GM12878 (cell line): ENCODE measurements at regions of chr6 and their contacts with region 1.

Region 1: GRCh38 chr6:125804264-125804663 is 13.5 kb downstream of the NCOA7 start:
- DNase-seq: peak; percentile 61
- ATAC-seq: peak; percentile 72
- H3K4me3 ChIP-seq: no peak overlapping the region
- H3K27ac ChIP-seq: peak overlapping the region; percentile 49
- H3K4me1 ChIP-seq: peaks cover 69% of the 10 kb centered on the region
- H3K27me3 ChIP-seq: no peaks in the 10 kb centered on the region
- CTCF ChIP-seq: no peak
- EP300 ChIP-seq: peak; percentile 83 to 98; a peak in 3 of 4 replicates
- POLR2A ChIP-seq: no peak
- RAD21 ChIP-seq: no peak

Region 2: GRCh38 chr6:125623085-125623484 is 181.2 kb before region 1 on chr6:
- CTCF ChIA-PET with region 1: no interaction called
- POLR2A ChIA-PET with region 1: no interaction called
- RAD21 ChIA-PET with region 1: no interaction called
- SMC1A ChIA-PET with region 1: no interaction called
- in situ Hi-C with region 1: no loop called
- intact Hi-C with region 1: no loop called
- DNase-seq: no peak
- ATAC-seq: no peak
- H3K4me3 ChIP-seq: no peak overlapping the region
- H3K27ac ChIP-seq: no peak overlapping the region
- H3K4me1 ChIP-seq: no peaks in the 10 kb centered on the region
- H3K27me3 ChIP-seq: peaks cover 0 to 2% of the 10 kb centered on the region in 2 experiments; a peak in 1 of 4 replicates
- CTCF ChIP-seq: no peak
- EP300 ChIP-seq: no peak
- POLR2A ChIP-seq: no peak
- RAD21 ChIP-seq: no peak

Region 3: DNA sequence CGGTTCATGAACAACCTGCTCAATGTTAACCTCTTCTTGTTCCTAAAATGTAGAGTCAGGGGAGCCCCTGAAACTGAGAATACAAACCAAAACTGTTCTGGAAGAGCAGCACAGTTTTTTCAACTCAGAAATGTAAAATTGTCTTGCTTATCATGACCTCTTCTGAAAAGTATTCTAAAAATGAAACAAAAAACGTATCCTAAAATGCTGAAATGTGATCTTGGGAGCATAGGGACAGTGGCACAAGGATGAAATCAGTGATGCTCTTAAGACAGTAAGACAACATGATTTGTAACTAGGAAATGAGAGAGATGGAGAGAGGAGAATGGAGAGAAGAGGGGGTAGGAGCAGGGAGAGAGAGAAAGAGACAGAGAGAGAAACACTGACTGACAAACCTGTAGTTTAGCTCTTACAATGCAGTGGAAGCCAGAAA is 14.0 kb after region 1 on chr6:
- CTCF ChIA-PET with region 1: interaction called, 197 read pairs
- POLR2A ChIA-PET with region 1: interaction called, 15 read pairs
- RAD21 ChIA-PET with region 1: interaction called, 11 read pairs
- SMC1A ChIA-PET with region 1: interaction called, 325 read pairs
- in situ Hi-C with region 1: no loop called
- intact Hi-C with region 1: no loop called
- DNase-seq: no peak
- ATAC-seq: peak; percentile 30
- H3K4me3 ChIP-seq: peak overlapping the region; percentile 57
- H3K27ac ChIP-seq: peak overlapping the region; percentile 63
- H3K4me1 ChIP-seq: peaks cover 27% of the 10 kb centered on the region
- H3K27me3 ChIP-seq: no peaks in the 10 kb centered on the region
- CTCF ChIP-seq: no peak
- EP300 ChIP-seq: no peak
- POLR2A ChIP-seq: no peak
- RAD21 ChIP-seq: no peak

Region 4: GRCh38 chr6:126307849-126308248 is 503.6 kb after region 1 on chr6:
- CTCF ChIA-PET with region 1: no interaction called
- POLR2A ChIA-PET with region 1: no interaction called
- RAD21 ChIA-PET with region 1: no interaction called
- SMC1A ChIA-PET with region 1: no interaction called
- in situ Hi-C with region 1: no loop called
- intact Hi-C with region 1: no loop called
- DNase-seq: no peak
- ATAC-seq: no peak
- H3K4me3 ChIP-seq: no peak overlapping the region
- H3K27ac ChIP-seq: no peak overlapping the region
- H3K4me1 ChIP-seq: no peaks in the 10 kb centered on the region
- H3K27me3 ChIP-seq: no peaks in the 10 kb centered on the region
- CTCF ChIP-seq: no peak
- EP300 ChIP-seq: no peak
- POLR2A ChIP-seq: no peak
- RAD21 ChIP-seq: no peak